AG04450 (cell line): ENCODE measurements at regions of chr10 and their contacts with region 1.

Region 1: DNA sequence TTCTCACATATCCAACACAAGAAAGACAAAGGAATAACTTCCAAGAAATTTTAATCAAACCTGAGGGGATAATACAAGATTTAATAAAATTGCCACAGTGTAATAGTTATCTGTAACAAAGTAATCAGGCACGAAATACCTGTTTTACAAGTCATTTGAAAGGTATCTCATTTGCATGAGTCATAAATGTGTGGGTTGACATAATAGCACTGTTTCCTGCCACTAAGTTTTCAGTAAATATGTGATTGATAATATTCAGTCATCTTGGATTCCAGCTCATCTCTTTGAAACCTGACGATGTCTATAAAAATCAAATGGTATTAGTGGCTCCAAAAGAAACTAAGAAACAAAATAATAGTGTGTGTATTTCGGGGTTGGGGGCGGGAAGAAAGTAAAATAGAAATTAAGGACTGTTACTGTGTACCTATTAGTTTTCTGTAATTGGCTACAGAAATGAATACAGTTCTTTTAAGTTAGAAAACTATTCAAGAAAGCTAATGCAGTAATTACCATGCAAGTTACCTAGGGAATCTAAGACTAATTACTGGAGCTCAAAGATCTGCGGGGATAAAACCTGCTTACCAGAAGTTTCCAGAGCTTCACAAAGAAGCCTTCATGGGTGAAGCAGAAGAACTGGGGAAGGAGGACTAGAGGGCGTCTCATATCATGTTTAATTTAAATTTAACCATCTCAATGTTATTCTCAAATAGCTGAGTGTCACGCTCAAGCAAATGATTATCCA is 100.7 kb downstream of the ST8SIA6 start:
- DNase-seq: no peak
- H3K4me3 ChIP-seq: no peak overlapping the region
- H3K27ac ChIP-seq: no peak overlapping the region
- H3K27me3 ChIP-seq: no peaks in the 10 kb centered on the region
- CTCF ChIP-seq: no peak

Region 2: GRCh38 chr10:17335065-17335464 is 18.7 kb before region 1 on chr10:
- CTCF ChIA-PET with region 1: no interaction called
- POLR2A ChIA-PET with region 1: no interaction called
- DNase-seq: peak; percentile 39
- H3K4me3 ChIP-seq: no peak overlapping the region
- H3K27ac ChIP-seq: no peak overlapping the region
- H3K27me3 ChIP-seq: no peaks in the 10 kb centered on the region
- CTCF ChIP-seq: no peak

Region 3: DNA sequence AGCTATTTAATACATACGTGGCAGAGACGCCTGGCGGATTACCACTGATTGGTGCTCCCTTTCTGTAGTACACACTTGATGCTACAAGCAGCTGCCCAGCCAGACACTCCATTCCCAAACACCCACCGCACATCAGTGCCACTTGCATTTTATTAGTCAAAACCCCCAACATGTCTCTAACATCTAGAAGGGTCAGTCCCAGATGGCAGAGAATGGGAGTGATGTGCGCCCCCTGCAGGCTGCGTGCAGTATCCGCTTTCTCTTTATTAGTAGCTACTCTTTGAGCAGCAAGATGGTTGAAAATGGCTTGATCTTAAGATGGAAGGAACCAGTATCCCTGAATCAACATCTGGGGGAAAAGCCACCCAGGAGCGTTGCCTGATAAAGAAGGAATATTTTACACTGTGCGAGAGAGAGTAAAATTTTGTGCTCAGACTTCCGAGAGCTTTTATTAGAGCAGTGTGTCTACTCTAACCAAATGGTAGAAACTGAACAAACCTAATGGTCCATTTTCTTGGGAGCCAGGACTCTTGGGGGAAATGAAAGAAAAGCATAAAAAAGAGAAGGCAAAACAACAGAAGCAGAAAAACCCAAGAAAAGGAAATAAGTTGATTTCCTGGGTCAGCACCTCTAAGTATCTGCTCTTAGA is 22.3 kb after region 1 on chr10:
- CTCF ChIA-PET with region 1: interaction called, 16 read pairs
- POLR2A ChIA-PET with region 1: no interaction called
- DNase-seq: no peak
- H3K4me3 ChIP-seq: no peak overlapping the region
- H3K27ac ChIP-seq: no peak overlapping the region
- H3K27me3 ChIP-seq: peaks cover 21% of the 10 kb centered on the region
- CTCF ChIP-seq: peak; percentile 56